ENCODE measurements at regions of chr6 and their contacts with region 1.

Region 1: DNA sequence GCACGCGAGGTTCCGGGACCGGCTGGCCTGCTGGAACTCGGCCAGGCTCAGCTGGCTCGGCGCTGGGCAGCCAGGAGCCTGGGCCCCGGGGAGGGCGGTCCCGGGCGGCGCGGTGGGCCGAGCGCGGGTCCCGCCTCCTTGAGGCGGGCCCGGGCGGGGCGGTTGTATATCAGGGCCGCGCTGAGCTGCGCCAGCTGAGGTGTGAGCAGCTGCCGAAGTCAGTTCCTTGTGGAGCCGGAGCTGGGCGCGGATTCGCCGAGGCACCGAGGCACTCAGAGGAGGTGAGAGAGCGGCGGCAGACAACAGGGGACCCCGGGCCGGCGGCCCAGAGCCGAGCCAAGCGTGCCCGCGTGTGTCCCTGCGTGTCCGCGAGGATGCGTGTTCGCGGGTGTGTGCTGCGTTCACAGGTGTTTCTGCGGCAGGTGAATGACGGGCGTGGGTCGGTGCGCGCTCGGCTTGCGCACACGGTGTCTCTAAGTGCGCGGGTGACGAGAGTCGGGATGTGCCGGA is at the start of gene CDKN1A:
- DNase-seq: peak; percentile 84
- ATAC-seq: peak; percentile 72
- H3K4me3 Mint-ChIP-seq: peak within 1 kb of the TSS; percentile 89
- H3K27ac Mint-ChIP-seq: peak within 1 kb of the TSS; percentile 90
- H3K4me1 Mint-ChIP-seq: peaks cover 65% of the 10 kb centered on the region
- H3K27me3 Mint-ChIP-seq: no peaks in the 10 kb centered on the region
- total RNA-seq, gene CDKN1A: 43.4 to 44.2 TPM

Region 2: GRCh38 chr6:36623547-36624459 is 54.8 kb before region 1 on chr6:
- CTCF ChIA-PET with region 1: interaction called, 14 read pairs
- POLR2A ChIA-PET with region 1: no interaction called
- DNase-seq: peak; percentile 83
- ATAC-seq: peak; percentile 77
- H3K4me3 Mint-ChIP-seq: no peak overlapping the region
- H3K27ac Mint-ChIP-seq: peak overlapping the region; percentile 1
- H3K4me1 Mint-ChIP-seq: peaks cover 38% of the 10 kb centered on the region
- H3K27me3 Mint-ChIP-seq: no peaks in the 10 kb centered on the region

Region 3: GRCh38 chr6:36692220-36692619 is 13.6 kb after region 1 on chr6:
- CTCF ChIA-PET with region 1: interaction called, 40 read pairs
- POLR2A ChIA-PET with region 1: interaction called, 5 read pairs
- DNase-seq: peak; percentile 78
- ATAC-seq: peak; percentile 90
- H3K4me3 Mint-ChIP-seq: peak overlapping the region; percentile 9
- H3K27ac Mint-ChIP-seq: peak overlapping the region; percentile 86
- H3K4me1 Mint-ChIP-seq: peaks cover 46% of the 10 kb centered on the region
- H3K27me3 Mint-ChIP-seq: no peaks in the 10 kb centered on the region

Measured in activated CD8-positive, alpha-beta T cell treated with anti-CD3 and anti-CD28 coated beads, Interleukin-2, amount 10 ng/mL, durations not matched to agents 7 days and 5 days (primary cell).